PC-9 (cell line): ENCODE measurements at regions of chr14 and their contacts with region 1.

Region 1: DNA sequence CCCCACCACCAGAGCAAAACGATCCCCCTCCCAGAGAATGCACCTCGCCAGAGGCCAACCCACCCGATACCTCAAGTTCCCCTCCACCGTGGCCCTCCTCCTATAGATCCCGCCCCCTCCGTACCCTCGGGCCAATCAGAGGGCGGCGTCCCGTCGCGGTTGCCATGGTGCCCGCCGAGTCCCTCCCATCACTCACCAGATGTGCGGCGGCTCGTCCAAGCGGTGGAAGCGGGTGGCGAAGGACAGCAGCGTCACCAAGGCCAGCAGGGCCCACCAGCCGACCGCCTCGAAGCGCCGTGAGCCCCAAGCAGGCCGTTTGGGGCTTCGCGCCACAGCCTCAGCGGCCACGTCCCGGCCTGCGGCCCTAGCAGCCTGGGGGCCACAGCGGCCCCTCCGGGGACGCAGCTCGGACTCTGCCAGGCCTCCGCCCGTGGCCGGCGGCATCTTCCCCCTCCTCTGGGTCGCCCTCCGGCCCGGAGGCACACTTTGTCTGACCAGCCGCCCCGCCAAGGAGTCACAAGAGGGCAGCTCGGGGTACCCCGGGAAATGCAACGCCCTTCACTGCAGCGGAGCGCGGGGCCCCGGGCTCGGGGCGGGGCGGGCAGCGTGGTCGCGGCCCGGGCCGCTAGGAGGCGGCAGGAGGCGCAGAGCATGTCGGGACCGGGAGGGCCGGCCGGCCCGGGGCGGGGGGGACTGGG is at the start of gene POMT2:
- DNase-seq: peak; percentile 89 to 100
- H3K4me3 ChIP-seq: peak within 1 kb of the TSS; percentile 83
- H3K27ac ChIP-seq: peak within 1 kb of the TSS; percentile 72
- H3K4me1 ChIP-seq: peaks cover 18% of the 10 kb centered on the region
- H3K27me3 ChIP-seq: no peaks in the 10 kb centered on the region
- CTCF ChIP-seq: peak; percentile 76
- total RNA-seq, gene POMT2: 96.5 and 109 TPM in 2 replicates

Region 2: GRCh38 chr14:76274324-76274723 is 1046.1 kb before region 1 on chr14:
- CTCF ChIA-PET with region 1: no interaction called
- POLR2A ChIA-PET with region 1: no interaction called
- intact Hi-C with region 1: no loop called
- DNase-seq: no peak
- H3K4me3 ChIP-seq: no peak overlapping the region
- H3K27ac ChIP-seq: no peak overlapping the region
- H3K4me1 ChIP-seq: no peaks in the 10 kb centered on the region
- H3K27me3 ChIP-seq: peaks cover 100% of the 10 kb centered on the region
- CTCF ChIP-seq: no peak

Region 3: GRCh38 chr14:76812211-76813044 is 508.0 kb before region 1 on chr14 and contains the start of gene ANGEL1:
- CTCF ChIA-PET with region 1: no interaction called
- POLR2A ChIA-PET with region 1: no interaction called
- intact Hi-C with region 1: loop called (anchors 1 kb)
- DNase-seq: peak; percentile 85 to 100
- H3K4me3 ChIP-seq: peak within 1 kb of the TSS; percentile 74
- H3K27ac ChIP-seq: no peak within 1 kb of the TSS
- H3K4me1 ChIP-seq: peaks cover 14% of the 10 kb centered on the region
- H3K27me3 ChIP-seq: peaks cover 17% of the 10 kb centered on the region
- CTCF ChIP-seq: no peak
- total RNA-seq, gene ANGEL1: 31.7 and 44.0 TPM in 2 replicates

Region 4: GRCh38 chr14:77045238-77046162 is 274.9 kb before region 1 on chr14:
- CTCF ChIA-PET with region 1: no interaction called
- POLR2A ChIA-PET with region 1: interaction called, 26 read pairs
- intact Hi-C with region 1: no loop called
- DNase-seq: peak; percentile 91
- H3K4me3 ChIP-seq: peak overlapping the region; percentile 3; the same call in 1 of the 2 replicates
- H3K27ac ChIP-seq: peak overlapping the region; percentile 82
- H3K4me1 ChIP-seq: peaks cover 72% of the 10 kb centered on the region
- H3K27me3 ChIP-seq: no peaks in the 10 kb centered on the region
- CTCF ChIP-seq: no peak

Region 5: GRCh38 chr14:77181603-77182437 is 138.6 kb before region 1 on chr14 and contains the start of gene TMEM63C:
- CTCF ChIA-PET with region 1: interaction called, 10 read pairs
- POLR2A ChIA-PET with region 1: no interaction called
- intact Hi-C with region 1: no loop called
- DNase-seq: peak; percentile 66 to 92
- H3K4me3 ChIP-seq: peak within 1 kb of the TSS; percentile 50; the same call in 1 of the 2 replicates
- H3K27ac ChIP-seq: no peak within 1 kb of the TSS
- H3K4me1 ChIP-seq: no peaks in the 10 kb centered on the region
- H3K27me3 ChIP-seq: peaks cover 72% of the 10 kb centered on the region
- CTCF ChIP-seq: no peak
- total RNA-seq, gene TMEM63C: 2.1 and 2.2 TPM in 2 replicates

Region 6: DNA sequence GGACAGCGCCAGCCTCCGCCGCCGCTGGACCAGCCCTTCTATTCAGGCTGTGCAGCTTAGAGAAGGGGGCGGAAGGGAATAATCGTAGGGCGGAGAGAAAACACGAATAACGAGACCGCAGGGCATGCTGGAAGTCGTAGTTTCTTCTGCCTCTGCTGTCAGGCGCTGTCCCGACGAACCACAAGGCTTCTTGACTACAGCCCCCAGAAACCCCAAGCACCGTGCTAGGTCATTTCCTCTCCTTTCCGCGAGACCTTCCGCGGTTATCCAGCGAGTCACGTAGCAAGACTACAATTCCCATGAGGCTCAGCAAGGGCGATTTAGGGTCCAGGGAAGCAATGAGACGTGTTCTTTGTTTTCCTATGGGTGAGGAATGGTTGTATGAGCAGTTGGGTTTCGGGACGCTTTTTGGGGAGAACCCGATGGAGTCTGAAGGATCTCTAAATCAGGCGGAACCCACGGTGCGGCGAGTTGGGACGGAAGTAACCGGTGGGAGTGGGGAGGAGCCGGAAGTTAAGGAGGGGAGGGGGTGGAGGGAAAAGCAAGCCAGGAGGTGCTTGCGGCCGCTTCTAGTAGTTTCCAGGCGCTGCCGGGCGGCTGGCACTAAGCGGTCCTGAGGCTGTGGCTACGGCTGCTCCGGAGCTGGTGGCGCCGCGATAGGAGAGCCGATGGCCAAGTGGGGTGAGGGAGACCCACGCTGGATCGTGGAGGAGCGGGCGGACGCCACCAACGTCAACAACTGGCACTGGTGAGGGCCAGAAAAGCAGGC is 137.3 kb after region 1 on chr14 and contains the starts of genes AHSA1 and VIPAS39:
- CTCF ChIA-PET with region 1: interaction called, 4 read pairs
- POLR2A ChIA-PET with region 1: interaction called, 8 read pairs
- intact Hi-C with region 1: loop called (anchors 1 kb)
- DNase-seq: peak; percentile 99 to 100
- H3K4me3 ChIP-seq: peak within 1 kb of the TSS; percentile 73
- H3K27ac ChIP-seq: peak within 1 kb of the TSS; percentile 80
- H3K4me1 ChIP-seq: peaks cover 20% of the 10 kb centered on the region
- H3K27me3 ChIP-seq: no peaks in the 10 kb centered on the region
- CTCF ChIP-seq: no peak
- total RNA-seq, gene AHSA1: 448 and 674 TPM in 2 replicates
- total RNA-seq, gene VIPAS39: 46.1 and 54.5 TPM in 2 replicates

Region 7: GRCh38 chr14:77660754-77661153 is 340.4 kb after region 1 on chr14:
- CTCF ChIA-PET with region 1: no interaction called
- POLR2A ChIA-PET with region 1: interaction called, 14 read pairs
- intact Hi-C with region 1: no loop called
- DNase-seq: no peak
- H3K4me3 ChIP-seq: no peak overlapping the region
- H3K27ac ChIP-seq: no peak overlapping the region
- H3K4me1 ChIP-seq: peaks cover 14% of the 10 kb centered on the region
- H3K27me3 ChIP-seq: no peaks in the 10 kb centered on the region
- CTCF ChIP-seq: no peak